ENCODE measurements at regions of chr6 and their contacts with region 1.

Region 1: GRCh38 chr6:107800564-107801164 is 23.4 kb downstream of the SCML4 start:
- DNase-seq: no peak
- ATAC-seq: no peak
- H3K4me3 Mint-ChIP-seq: no peak overlapping the region
- H3K27ac Mint-ChIP-seq: peak overlapping the region; percentile 2
- H3K4me1 Mint-ChIP-seq: peaks cover 69% of the 10 kb centered on the region
- H3K27me3 Mint-ChIP-seq: no peaks in the 10 kb centered on the region

Region 2: DNA sequence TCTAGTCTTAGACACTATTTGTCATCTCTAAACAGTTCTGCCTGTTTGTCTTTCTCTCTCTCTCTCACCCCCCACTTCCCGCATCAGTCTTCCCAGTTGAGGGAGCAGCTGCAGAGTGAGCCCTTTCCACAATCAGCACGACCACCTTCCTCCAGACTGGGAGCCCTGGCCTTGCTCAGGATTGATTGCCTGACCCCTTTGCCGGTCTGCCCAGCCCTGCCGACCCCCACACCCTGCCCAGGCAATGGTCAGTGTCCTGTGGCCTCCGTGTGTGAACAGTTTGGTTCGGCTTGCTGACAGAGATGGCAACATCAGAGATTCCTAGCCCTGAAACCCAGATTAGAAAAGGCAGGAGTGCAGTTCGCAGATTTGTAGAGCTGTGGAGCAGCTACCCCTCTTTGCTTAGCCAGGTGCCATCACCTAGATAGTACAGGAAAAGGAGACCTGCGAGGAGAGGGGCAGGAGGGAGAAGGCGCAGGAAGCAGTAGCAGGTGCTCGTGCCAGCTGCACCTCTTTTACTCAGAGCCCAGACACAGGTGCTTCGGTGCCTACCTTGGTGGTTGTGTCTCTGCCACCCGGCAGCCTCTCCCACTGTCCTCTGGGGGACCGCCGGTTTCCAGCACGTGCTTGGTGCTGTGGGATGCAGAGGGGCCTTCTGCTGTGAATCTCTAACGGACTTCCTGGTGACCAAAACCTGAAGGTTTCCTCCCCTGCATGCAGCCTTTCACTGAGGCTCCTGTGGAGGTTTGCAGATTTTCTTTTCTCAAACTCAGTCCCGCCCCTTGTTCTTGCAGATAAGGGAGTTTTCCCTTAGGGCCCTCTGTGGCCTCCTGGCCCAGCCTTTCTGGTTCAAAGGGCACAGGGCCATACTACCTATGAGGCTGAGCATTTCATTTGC is 69.0 kb before region 1 on chr6:
- CTCF ChIA-PET with region 1: interaction called, 6 read pairs
- POLR2A ChIA-PET with region 1: no interaction called
- intact Hi-C with region 1: loop called in 1 of 2 experiments (anchors 2 kb)
- DNase-seq: peak; percentile 46
- ATAC-seq: peak; percentile 20
- H3K4me3 Mint-ChIP-seq: peak overlapping the region; percentile 79
- H3K27ac Mint-ChIP-seq: peak overlapping the region; percentile 91
- H3K4me1 Mint-ChIP-seq: peaks cover 82% of the 10 kb centered on the region
- H3K27me3 Mint-ChIP-seq: no peaks in the 10 kb centered on the region

Measured in activated CD4-positive, alpha-beta T cell treated with anti-CD3 and anti-CD28 coated beads for 36 hours (primary cell).